Sciatic nerve (tissue), 2 donors: ENCODE measurements at regions of chr6 and their contacts with region 1.

Region 1: GRCh38 chr6:110039364-110039980 is 61.4 kb downstream of the GPR6 start:
- DNase-seq: peak; percentile 90
- ATAC-seq: peak; percentile 92

Region 2: DNA sequence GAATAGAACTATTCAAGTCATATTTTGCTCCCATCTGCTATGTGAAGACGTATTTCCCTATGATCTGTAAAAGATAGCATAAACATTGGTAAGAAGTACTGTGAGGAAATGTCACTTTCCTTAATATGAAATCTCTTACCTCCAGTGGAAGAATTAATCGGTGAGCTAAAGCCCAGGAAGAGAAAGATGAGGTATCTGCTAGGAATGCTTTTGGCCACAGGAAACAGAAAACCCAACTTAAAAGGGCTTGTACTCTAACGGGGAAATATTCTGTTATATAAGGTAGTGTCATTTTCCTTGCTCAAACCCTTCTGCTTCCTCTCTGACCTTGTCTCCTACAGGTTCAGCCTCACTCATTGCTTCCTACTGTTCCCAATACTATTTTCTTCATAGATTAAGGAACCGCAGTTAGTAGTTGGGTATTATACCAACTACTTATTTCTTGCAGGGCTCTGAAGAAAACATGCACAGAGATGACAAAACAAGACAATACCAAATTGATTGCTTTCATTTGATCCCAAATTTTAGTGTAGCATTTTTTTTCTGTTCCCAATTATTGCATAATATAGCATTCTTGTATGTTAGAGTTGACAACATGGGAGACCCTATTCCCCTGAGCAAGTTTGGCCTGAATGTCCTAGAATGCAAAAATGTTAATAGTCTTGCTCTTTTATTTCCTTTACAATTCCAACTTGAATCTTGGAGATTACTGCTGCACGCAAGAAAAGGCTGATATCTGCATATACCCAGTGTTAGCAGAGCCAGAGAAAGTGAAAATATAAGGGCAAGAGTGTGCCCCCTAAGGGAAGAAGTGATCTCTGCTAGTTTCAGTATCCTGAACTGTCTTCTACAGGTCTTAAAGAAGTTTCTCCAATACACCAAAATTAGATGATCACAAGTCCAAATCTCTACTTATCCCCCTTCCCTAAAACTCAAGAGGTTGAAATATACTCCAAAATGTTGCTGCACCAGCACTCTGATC is 1679.3 kb before region 1 on chr6:
- intact Hi-C with region 1: loop called (anchors 5 kb)
- DNase-seq: no peak
- ATAC-seq: no peak

Region 3: GRCh38 chr6:109705258-109705657 is 334.2 kb before region 1 on chr6:
- intact Hi-C with region 1: loop called (anchors 5 kb)
- DNase-seq: peak; percentile 89
- ATAC-seq: peak; percentile 94